Motor neuron (in vitro differentiated cells): ENCODE measurements at regions of chr9 and their contacts with region 1.

Region 1: GRCh38 chr9:106745457-106745856 is 117.5 kb upstream of the ZNF462 start:
- ATAC-seq: no peak
- H3K4me3 ChIP-seq: no peak overlapping the region
- H3K27ac ChIP-seq: no peak overlapping the region
- H3K4me1 ChIP-seq: no peaks in the 10 kb centered on the region

Region 2: GRCh38 chr9:106648799-106649198 is 96.7 kb before region 1 on chr9:
- in situ Hi-C with region 1: loop called in 1 of 9 experiments (anchors 25 kb)
- ATAC-seq: no peak
- H3K4me3 ChIP-seq: no peak overlapping the region
- H3K27ac ChIP-seq: no peak overlapping the region
- H3K4me1 ChIP-seq: no peaks in the 10 kb centered on the region